Activated B cell treated with CpG ODN at 0.5 μM for 24 hours (primary cell): ENCODE measurements at regions of chr5 and their contacts with region 1.

Region 1: DNA sequence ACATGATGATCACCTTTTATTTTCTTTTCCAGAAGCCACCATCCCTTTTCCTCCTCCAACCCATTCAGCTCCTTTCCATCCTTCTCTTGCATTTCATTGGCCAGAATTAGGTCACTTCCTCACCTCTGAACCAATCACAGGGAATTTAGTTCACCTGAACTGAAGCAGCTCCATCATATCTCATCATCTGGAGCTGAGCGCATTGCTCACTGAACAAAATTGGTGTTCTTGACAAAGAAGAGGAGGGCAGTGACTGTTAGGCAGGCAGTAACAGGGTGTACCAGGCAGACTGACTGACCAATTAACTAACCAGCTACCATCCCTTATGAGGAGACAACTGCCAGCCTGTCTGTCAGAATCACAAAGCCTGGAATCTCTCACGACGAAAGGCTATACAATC is 1.8 kb upstream of the ZNF354A start:
- DNase-seq: no peak
- ATAC-seq: no peak
- H3K4me3 Mint-ChIP-seq: no peak overlapping the region
- H3K27ac Mint-ChIP-seq: no peak overlapping the region
- H3K4me1 Mint-ChIP-seq: peaks cover 10% of the 10 kb centered on the region
- H3K27me3 Mint-ChIP-seq: peaks cover 2% of the 10 kb centered on the region
- CTCF ChIP-seq: no peak

Region 2: DNA sequence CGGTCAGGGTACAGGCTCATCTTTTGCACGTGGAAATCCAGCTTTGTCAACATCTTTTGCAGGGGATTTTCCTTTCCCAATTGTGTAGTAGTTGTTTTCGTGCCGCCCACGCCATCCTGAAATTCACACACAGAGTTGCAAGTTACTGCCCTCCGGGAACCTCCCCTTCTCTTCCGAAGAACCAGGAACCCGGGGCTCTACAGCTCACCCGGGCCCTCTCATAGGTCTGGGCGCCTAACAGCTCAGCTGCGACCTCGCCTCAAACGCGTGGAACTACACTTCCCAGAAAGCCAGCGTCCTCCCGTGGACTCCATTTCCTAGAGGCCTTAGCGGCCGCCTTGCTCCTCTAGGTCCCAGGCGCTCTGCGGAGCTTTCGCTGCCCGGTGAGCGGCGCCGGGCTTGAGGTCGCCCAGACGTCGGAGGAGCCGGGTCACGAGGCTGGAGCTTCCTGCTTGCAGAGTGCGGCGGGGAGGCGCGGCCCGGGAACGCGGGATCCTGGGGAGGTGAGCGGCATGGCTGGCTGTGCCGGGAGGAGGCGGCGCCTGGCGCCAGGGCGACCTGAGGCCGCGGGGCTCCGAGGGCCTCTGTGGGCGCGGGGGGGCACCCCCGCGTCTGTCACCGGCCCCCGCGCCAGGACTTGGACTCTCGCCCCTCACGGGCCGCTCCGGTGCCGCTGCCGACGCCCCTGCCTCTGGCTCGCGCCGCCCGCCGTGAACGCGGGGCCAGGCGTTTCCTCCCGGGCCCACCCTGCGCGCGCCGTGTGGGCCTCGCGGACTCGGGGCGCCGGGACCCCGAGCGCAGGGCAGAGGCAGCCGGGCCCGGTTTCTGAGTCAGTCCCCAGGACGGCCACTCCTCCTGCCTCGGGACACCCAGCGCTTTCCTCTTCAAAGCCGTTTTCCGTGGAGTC is 127.6 kb after region 1 on chr5 and contains the start of gene ZNF354B:
- CTCF ChIA-PET with region 1: interaction called, 19 read pairs
- POLR2A ChIA-PET with region 1: interaction called, 12 read pairs
- intact Hi-C with region 1: loop called (anchors 1 kb)
- DNase-seq: peak; percentile 73
- ATAC-seq: peak; percentile 99
- H3K4me3 Mint-ChIP-seq: peak within 1 kb of the TSS; percentile 89
- H3K27ac Mint-ChIP-seq: peak within 1 kb of the TSS; percentile 82
- H3K4me1 Mint-ChIP-seq: peaks cover 19% of the 10 kb centered on the region
- H3K27me3 Mint-ChIP-seq: no peaks in the 10 kb centered on the region
- CTCF ChIP-seq: no peak
- total RNA-seq, gene ZNF354B: 17.5 and 20.0 TPM in 2 replicates

Region 3: GRCh38 chr5:179023528-179024430 is 291.5 kb after region 1 on chr5 and contains the start of gene ZNF879:
- CTCF ChIA-PET with region 1: no interaction called
- POLR2A ChIA-PET with region 1: no interaction called
- intact Hi-C with region 1: loop called (anchors 1 kb)
- DNase-seq: peak; percentile 94
- ATAC-seq: peak; percentile 92
- H3K4me3 Mint-ChIP-seq: peak within 1 kb of the TSS; percentile 93
- H3K27ac Mint-ChIP-seq: peak within 1 kb of the TSS; percentile 81
- H3K4me1 Mint-ChIP-seq: peaks cover 18% of the 10 kb centered on the region
- H3K27me3 Mint-ChIP-seq: peaks cover 2% of the 10 kb centered on the region
- CTCF ChIP-seq: no peak
- total RNA-seq, gene ZNF879: 8.2 and 9.4 TPM in 2 replicates

Region 4: GRCh38 chr5:179060116-179061008 is 328.1 kb after region 1 on chr5 and contains the start of gene ZNF354C:
- CTCF ChIA-PET with region 1: interaction called, 7 read pairs
- POLR2A ChIA-PET with region 1: interaction called, 13 read pairs
- intact Hi-C with region 1: loop called (anchors 1 kb)
- DNase-seq: peak; percentile 80
- ATAC-seq: peak; percentile 97
- H3K4me3 Mint-ChIP-seq: peak within 1 kb of the TSS; percentile 92
- H3K27ac Mint-ChIP-seq: peak within 1 kb of the TSS; percentile 86
- H3K4me1 Mint-ChIP-seq: peaks cover 20% of the 10 kb centered on the region
- H3K27me3 Mint-ChIP-seq: no peaks in the 10 kb centered on the region
- CTCF ChIP-seq: no peak
- total RNA-seq, gene ZNF354C: 6.3 and 7.1 TPM in 2 replicates

Region 5: GRCh38 chr5:179495906-179496455 is 763.7 kb after region 1 on chr5:
- CTCF ChIA-PET with region 1: interaction called, 5 read pairs
- POLR2A ChIA-PET with region 1: no interaction called
- intact Hi-C with region 1: loop called (anchors 1 kb)
- DNase-seq: no peak
- ATAC-seq: no peak
- H3K4me3 Mint-ChIP-seq: no peak overlapping the region
- H3K27ac Mint-ChIP-seq: no peak overlapping the region
- H3K4me1 Mint-ChIP-seq: peaks cover 2% of the 10 kb centered on the region
- H3K27me3 Mint-ChIP-seq: peaks cover 2% of the 10 kb centered on the region
- CTCF ChIP-seq: no peak

Region 6: GRCh38 chr5:179542170-179542569 is 809.9 kb after region 1 on chr5:
- CTCF ChIA-PET with region 1: no interaction called
- POLR2A ChIA-PET with region 1: no interaction called
- intact Hi-C with region 1: loop called (anchors 5 kb)
- DNase-seq: no peak
- ATAC-seq: no peak
- H3K4me3 Mint-ChIP-seq: no peak overlapping the region
- H3K27ac Mint-ChIP-seq: peak overlapping the region; percentile 54
- H3K4me1 Mint-ChIP-seq: peaks cover 47% of the 10 kb centered on the region
- H3K27me3 Mint-ChIP-seq: no peaks in the 10 kb centered on the region
- CTCF ChIP-seq: no peak